Endothelial cell of umbilical vein (primary cell): ENCODE measurements at regions of chr9 and their contacts with region 1.

Region 1: DNA sequence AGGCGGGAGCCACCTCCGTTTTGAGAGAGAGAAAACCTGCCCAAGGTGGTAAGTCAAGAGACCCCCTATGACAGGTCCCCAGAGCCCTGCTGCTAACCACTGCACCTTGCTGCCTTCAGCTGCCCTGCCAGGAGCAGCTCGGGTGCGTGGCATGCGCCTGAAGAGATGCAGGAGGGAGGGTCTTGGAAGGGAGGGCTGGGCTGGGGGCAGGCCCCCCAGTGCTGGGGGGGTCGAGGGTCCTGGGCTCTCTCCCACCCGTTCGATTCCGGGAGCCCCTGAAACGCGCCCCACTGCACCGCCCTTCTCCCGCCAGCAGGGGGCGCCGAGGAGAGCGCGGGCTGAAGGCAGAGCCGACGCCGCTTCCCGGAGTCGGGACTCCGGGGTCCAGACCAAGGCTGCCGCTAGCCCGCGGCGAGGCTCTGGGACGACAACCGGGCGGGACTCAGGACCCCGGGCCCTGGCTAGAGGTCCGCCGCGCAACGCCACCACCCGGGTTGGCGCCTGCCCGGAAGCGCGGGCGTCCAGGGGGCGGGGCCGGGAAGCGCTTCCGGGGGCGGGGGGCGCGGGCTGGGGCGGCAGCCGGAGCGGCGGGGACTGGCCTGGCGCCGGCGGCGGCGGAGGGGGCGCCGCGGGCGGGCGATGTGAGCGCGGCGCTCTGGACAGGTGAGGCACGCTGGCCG is at the start of gene ZBTB34:
- DNase-seq: peak; percentile 61
- H3K4me3 ChIP-seq: peak within 1 kb of the TSS; percentile 73 to 94 (median 85)
- H3K27ac ChIP-seq: peak within 1 kb of the TSS; percentile 72
- H3K4me1 ChIP-seq: peaks cover 16% of the 10 kb centered on the region
- H3K27me3 ChIP-seq: peaks cover 22 to 25% of the 10 kb centered on the region in 2 experiments
- CTCF ChIP-seq: peak; percentile 98 to 99
- POLR2A ChIP-seq: peak; percentile 73
- total RNA-seq, gene ZBTB34: 9.3 and 9.6 TPM in 2 replicates

Region 2: DNA sequence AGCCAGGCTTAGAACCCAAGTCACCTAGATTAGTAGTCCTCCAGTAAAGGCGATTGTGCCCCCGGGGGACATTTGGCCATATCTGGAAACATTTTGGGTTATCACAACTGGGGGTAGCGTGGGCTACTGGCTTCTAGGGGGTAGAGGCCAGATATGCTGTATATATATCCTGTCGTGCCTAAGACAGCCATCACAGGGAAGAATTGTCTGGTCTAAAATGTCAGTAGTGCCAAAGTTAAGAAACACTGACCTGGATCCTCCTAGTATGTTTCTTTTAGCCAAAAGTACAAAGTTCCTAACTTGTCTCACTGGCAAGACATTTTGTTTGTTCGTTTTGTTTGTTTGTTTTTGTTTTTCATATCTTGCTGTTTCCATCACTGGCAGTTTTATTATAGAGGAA is 1646.0 kb before region 1 on chr9:
- CTCF ChIA-PET with region 1: no interaction called
- POLR2A ChIA-PET with region 1: no interaction called
- dilution Hi-C with region 1: no loop called
- intact Hi-C with region 1: no loop called
- DNase-seq: no peak
- H3K4me3 ChIP-seq: no peak overlapping the region
- H3K27ac ChIP-seq: no peak overlapping the region
- H3K4me1 ChIP-seq: no peaks in the 10 kb centered on the region
- H3K27me3 ChIP-seq: no peaks in the 10 kb centered on the region
- CTCF ChIP-seq: no peak
- POLR2A ChIP-seq: no peak

Region 3: DNA sequence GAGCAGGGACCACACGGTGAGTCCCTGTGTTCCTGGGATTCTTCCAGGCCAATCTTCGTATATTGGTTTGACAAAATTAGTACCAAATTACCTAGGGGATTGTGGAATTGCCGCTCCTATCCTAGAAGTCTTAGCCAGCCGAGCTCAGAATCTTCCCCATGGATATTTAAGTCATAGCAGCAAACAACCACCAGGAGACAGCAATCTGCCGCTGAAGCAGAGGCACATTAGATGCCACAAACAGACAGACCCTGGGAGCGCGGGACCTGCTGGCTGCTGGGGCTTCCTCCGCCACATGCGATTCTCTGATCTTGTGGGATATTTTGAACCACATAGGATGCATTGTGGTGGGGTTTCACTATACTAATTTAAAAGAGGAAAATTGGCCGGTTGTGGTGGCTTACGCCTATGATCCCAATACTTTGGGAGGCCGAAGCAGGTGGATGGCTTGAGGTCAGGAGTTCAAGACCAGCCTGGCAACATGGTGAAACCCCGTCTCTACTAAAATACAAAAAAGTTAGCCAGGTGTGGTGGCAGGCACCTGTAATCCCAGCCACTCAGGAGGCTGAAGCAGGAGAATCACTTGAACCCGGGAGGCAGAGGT is 87.1 kb before region 1 on chr9:
- CTCF ChIA-PET with region 1: no interaction called
- POLR2A ChIA-PET with region 1: no interaction called
- dilution Hi-C with region 1: no loop called
- intact Hi-C with region 1: no loop called
- DNase-seq: no peak
- H3K4me3 ChIP-seq: no peak overlapping the region
- H3K27ac ChIP-seq: no peak overlapping the region
- H3K4me1 ChIP-seq: no peaks in the 10 kb centered on the region
- H3K27me3 ChIP-seq: peaks cover 0 to 3% of the 10 kb centered on the region in 2 experiments
- CTCF ChIP-seq: peak; percentile 38 to 48
- POLR2A ChIP-seq: no peak

Region 4: DNA sequence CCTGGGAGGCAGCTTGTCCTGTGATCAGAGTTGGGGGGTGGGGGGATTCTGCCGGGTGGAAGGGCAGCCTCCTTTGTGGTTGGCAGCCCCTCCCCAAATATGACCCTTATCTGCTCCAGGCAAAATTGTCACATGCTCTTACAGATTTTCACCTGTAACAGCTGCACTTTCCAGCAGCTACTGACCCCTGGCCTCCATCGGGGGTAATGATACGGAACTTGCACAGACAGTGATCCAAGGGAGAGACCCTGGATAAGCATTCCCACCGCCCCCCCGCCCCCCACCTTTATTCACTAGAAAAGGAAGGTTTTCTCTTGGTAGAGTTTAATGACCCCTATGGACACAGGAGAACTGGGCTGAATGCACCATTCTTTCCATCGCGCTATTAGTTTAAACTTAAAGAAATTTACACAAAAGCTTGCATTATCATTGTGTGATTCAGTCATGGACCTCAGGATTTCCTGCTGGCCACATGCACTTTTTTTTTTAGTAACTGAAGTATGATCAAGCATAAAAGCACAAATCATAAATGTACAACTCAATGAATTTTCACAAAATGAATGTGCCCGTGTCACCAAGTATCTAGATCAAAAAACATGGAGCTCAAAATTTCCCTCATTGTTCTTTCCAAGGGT is 10.5 kb before region 1 on chr9:
- CTCF ChIA-PET with region 1: interaction called, 11 read pairs
- POLR2A ChIA-PET with region 1: no interaction called
- dilution Hi-C with region 1: no loop called
- intact Hi-C with region 1: no loop called
- DNase-seq: no peak
- H3K4me3 ChIP-seq: no peak overlapping the region
- H3K27ac ChIP-seq: no peak overlapping the region
- H3K4me1 ChIP-seq: no peaks in the 10 kb centered on the region
- H3K27me3 ChIP-seq: peaks cover 22% of the 10 kb centered on the region in 2 experiments
- CTCF ChIP-seq: no peak
- POLR2A ChIP-seq: no peak

Region 5: DNA sequence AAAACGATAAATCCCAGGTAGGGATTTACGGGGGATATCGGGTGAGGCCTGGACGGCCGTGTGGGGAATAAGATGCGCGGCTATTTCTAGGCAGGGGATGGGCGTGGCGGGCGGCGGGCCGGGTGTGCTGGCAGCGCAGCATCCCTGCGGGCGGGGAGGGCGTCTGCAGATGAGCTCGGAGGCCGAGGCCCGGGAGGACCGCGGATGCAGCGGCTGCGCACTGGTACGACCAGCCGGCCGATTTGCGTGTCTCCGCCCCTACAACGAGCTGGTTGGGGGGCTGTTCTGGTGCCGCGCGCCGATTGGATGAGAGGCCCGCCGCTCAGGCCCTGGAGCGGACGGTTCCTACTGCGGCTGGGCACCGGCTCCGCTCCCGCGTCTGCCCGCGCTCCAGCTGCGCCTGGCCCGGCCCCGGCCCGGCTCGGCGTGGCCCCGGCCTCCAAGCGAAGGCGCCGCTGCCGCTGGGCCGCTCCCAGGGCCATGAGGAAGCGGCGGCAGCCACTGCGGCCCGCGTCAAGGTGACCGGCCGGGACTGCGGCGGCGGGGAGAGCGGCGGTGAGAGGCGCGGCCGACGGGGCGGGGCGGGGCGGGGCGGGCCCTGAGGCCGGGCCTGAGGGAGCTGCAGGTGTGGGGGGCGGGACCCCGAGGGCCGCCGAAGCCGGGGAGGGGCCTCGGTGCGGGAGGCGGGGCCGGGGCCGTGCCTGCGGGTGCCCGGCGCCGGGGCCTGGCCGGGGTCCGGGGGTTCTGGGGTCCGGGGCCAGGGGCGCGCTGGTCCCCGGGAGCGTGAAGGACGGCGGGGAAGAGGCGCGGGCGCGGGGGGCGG is 54.5 kb after region 1 on chr9 and contains the start of gene RALGPS1:
- CTCF ChIA-PET with region 1: interaction called, 6 read pairs
- POLR2A ChIA-PET with region 1: no interaction called
- dilution Hi-C with region 1: no loop called
- intact Hi-C with region 1: loop called (anchors 5 kb)
- DNase-seq: peak; percentile 95
- H3K4me3 ChIP-seq: peak within 1 kb of the TSS; percentile 30 to 44 (median 37)
- H3K27ac ChIP-seq: no peak within 1 kb of the TSS
- H3K4me1 ChIP-seq: no peaks in the 10 kb centered on the region
- H3K27me3 ChIP-seq: peaks cover 0 to 1% of the 10 kb centered on the region in 2 experiments
- CTCF ChIP-seq: no peak
- POLR2A ChIP-seq: no peak
- total RNA-seq, gene RALGPS1: 5.5 and 6.8 TPM in 2 replicates